ENCODE measurements at regions of chr16 and their contacts with region 1.

Region 1: GRCh38 chr16:53743149-53743566 is 39.2 kb downstream of the FTO start:
- DNase-seq: peak in 3 of 9 experiments; percentile 16 to 30 (median 16)
- ATAC-seq: no peak
- H3K4me3 ChIP-seq: no peak overlapping the region
- H3K4me3 Mint-ChIP-seq: no peak overlapping the region
- H3K27ac ChIP-seq: no peak overlapping the region
- H3K27ac Mint-ChIP-seq: no peak overlapping the region
- H3K4me1 ChIP-seq: peaks cover 16% of the 10 kb centered on the region
- H3K4me1 Mint-ChIP-seq: peaks cover 40% of the 10 kb centered on the region
- H3K27me3 ChIP-seq: no peaks in the 10 kb centered on the region
- H3K27me3 Mint-ChIP-seq: no peaks in the 10 kb centered on the region
- CTCF ChIP-seq: peak; percentile 55

Region 2: DNA sequence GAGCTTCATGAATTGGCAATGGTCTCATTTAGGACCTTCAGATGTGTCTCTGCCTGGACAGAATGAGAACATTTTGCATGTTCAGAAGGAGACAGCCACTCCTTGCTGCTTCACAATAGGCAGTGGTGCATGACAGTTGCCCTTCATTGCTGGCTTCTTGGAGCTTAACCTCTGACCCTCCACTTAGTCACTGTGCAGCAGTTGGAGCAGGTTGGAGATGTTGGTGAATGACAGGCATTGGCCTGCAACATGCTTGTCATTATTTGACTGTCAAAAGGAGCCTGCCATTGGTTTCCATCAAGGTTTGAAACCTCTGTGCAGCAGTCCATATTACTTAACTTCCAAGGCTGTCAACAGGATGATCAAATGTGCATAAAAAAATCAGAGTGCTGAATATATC is 16.5 kb before region 1 on chr16:
- CTCF ChIA-PET with region 1: interaction called, 3 read pairs
- POLR2A ChIA-PET with region 1: interaction called, 4 read pairs
- intact Hi-C with region 1: loop called in 1 of 2 experiments (anchors 1 kb)
- DNase-seq: no peak
- ATAC-seq: no peak
- H3K4me3 ChIP-seq: no peak overlapping the region
- H3K4me3 Mint-ChIP-seq: no peak overlapping the region
- H3K27ac ChIP-seq: no peak overlapping the region
- H3K27ac Mint-ChIP-seq: no peak overlapping the region
- H3K4me1 ChIP-seq: no peaks in the 10 kb centered on the region
- H3K4me1 Mint-ChIP-seq: peaks cover 39% of the 10 kb centered on the region
- H3K27me3 ChIP-seq: no peaks in the 10 kb centered on the region
- H3K27me3 Mint-ChIP-seq: no peaks in the 10 kb centered on the region
- CTCF ChIP-seq: no peak

Region 3: DNA sequence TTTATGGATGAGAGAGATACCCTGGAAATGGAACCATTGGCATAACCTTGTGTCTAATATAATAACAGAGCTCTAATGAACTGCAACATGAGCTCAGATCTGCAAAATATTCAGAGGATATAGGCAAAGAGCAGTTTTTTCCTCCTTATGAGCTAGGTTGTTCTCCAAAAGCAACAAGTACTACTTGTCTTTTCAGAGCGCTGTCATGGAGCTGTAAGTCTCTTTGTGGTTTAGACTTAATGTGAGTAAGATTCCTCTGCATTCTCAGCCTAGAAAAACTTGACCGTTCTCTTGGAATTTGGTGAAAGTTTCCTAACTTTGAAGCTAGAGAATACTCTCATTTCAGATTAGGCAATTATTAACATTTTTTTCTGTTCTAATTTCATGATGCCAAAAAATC is 46.0 kb after region 1 on chr16:
- CTCF ChIA-PET with region 1: no interaction called
- POLR2A ChIA-PET with region 1: no interaction called
- intact Hi-C with region 1: no loop called
- DNase-seq: no peak
- ATAC-seq: no peak
- H3K4me3 ChIP-seq: no peak overlapping the region
- H3K4me3 Mint-ChIP-seq: no peak overlapping the region
- H3K27ac ChIP-seq: no peak overlapping the region
- H3K27ac Mint-ChIP-seq: no peak overlapping the region
- H3K4me1 ChIP-seq: no peaks in the 10 kb centered on the region
- H3K4me1 Mint-ChIP-seq: peaks cover 24% of the 10 kb centered on the region
- H3K27me3 ChIP-seq: no peaks in the 10 kb centered on the region
- H3K27me3 Mint-ChIP-seq: no peaks in the 10 kb centered on the region
- CTCF ChIP-seq: no peak

Region 4: GRCh38 chr16:53822936-53823529 is 79.9 kb after region 1 on chr16:
- CTCF ChIA-PET with region 1: no interaction called
- POLR2A ChIA-PET with region 1: no interaction called
- intact Hi-C with region 1: loop called in 1 of 2 experiments (anchors 5 kb)
- DNase-seq: peak in 6 of 9 experiments; percentile 13 to 62 (median 32)
- ATAC-seq: peak; percentile 93
- H3K4me3 ChIP-seq: no peak overlapping the region
- H3K4me3 Mint-ChIP-seq: no peak overlapping the region
- H3K27ac ChIP-seq: no peak overlapping the region
- H3K27ac Mint-ChIP-seq: no peak overlapping the region
- H3K4me1 ChIP-seq: peaks cover 20% of the 10 kb centered on the region
- H3K4me1 Mint-ChIP-seq: peaks cover 10% of the 10 kb centered on the region
- H3K27me3 ChIP-seq: no peaks in the 10 kb centered on the region
- H3K27me3 Mint-ChIP-seq: no peaks in the 10 kb centered on the region
- CTCF ChIP-seq: no peak

Region 5: DNA sequence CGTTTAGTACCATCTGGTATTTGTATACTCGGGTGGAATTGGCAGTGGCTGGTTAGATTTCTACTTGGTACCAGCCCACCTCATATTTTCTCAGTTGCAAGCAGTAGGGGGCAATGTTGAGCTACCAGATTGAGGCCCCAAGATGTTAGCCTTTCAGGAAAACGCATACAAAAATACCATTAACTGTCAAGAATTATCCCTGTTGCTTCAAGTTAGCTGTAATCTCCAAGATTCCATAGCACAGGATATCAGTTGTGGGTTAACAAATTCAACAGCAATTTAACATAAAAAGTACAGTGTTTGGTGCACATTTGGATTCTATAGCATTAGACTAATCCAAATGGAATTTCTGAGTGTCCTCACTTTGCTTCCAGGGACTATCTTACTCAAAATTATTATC is 149.0 kb after region 1 on chr16:
- CTCF ChIA-PET with region 1: no interaction called
- POLR2A ChIA-PET with region 1: no interaction called
- intact Hi-C with region 1: no loop called
- DNase-seq: peak in 7 of 9 experiments; percentile 5 to 66 (median 40)
- ATAC-seq: no peak
- H3K4me3 ChIP-seq: no peak overlapping the region
- H3K4me3 Mint-ChIP-seq: no peak overlapping the region
- H3K27ac ChIP-seq: no peak overlapping the region
- H3K27ac Mint-ChIP-seq: no peak overlapping the region
- H3K4me1 ChIP-seq: no peaks in the 10 kb centered on the region
- H3K4me1 Mint-ChIP-seq: peaks cover 2% of the 10 kb centered on the region
- H3K27me3 ChIP-seq: no peaks in the 10 kb centered on the region
- H3K27me3 Mint-ChIP-seq: no peaks in the 10 kb centered on the region
- CTCF ChIP-seq: peak; percentile 71

Measured in CD8-positive, alpha-beta T cell (primary cell).